ENCODE measurements at regions of chr18 and their contacts with region 1.

Region 1: GRCh38 chr18:48675352-48675761 is 136.5 kb downstream of the CTIF start:
- DNase-seq: peak; percentile 91 to 92 (median 92)
- ATAC-seq: peak; percentile 85 to 91 (median 87)
- H3K4me3 ChIP-seq: no peak overlapping the region
- H3K27ac ChIP-seq: peak overlapping the region in 2 of 3 donors; percentile 37 to 47
- H3K4me1 ChIP-seq: peaks cover 0 to 53% (median 27%) of the 10 kb centered on the region in 4 donors
- H3K27me3 ChIP-seq: no peaks in the 10 kb centered on the region
- CTCF ChIP-seq: peak; percentile 92 to 97 (median 94)
- POLR2A ChIP-seq: no peak

Region 2: DNA sequence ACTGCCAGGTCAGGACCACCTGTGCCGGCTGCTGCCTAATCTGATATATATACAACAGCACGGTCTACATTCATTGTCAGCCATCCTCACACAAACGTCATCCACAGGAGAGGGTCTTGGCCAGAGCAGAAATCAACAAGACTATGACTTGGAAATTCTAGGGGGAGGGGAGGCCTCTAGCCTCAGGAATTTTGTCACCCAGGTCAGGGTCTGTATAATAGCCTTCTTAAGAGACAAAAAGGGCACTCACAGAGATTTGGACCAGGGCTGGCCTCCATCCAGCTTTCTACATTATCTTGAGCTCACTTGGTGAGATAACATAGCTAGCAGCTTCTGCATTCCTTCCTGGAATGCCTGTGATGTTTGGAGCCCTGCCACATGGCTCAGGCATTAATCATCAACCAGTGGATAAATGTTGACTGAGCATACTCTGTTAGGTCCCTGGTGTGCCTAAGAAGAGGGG is 186.9 kb before region 1 on chr18:
- intact Hi-C with region 1: no loop called
- DNase-seq: peak; percentile 84 to 88 (median 85)
- ATAC-seq: peak; percentile 95 to 99 (median 98)
- H3K4me3 ChIP-seq: no peak overlapping the region
- H3K27ac ChIP-seq: no peak overlapping the region
- H3K4me1 ChIP-seq: peaks cover 0 to 13% (median 6%) of the 10 kb centered on the region in 4 donors
- H3K27me3 ChIP-seq: no peaks in the 10 kb centered on the region
- CTCF ChIP-seq: no peak
- POLR2A ChIP-seq: no peak

Region 3: DNA sequence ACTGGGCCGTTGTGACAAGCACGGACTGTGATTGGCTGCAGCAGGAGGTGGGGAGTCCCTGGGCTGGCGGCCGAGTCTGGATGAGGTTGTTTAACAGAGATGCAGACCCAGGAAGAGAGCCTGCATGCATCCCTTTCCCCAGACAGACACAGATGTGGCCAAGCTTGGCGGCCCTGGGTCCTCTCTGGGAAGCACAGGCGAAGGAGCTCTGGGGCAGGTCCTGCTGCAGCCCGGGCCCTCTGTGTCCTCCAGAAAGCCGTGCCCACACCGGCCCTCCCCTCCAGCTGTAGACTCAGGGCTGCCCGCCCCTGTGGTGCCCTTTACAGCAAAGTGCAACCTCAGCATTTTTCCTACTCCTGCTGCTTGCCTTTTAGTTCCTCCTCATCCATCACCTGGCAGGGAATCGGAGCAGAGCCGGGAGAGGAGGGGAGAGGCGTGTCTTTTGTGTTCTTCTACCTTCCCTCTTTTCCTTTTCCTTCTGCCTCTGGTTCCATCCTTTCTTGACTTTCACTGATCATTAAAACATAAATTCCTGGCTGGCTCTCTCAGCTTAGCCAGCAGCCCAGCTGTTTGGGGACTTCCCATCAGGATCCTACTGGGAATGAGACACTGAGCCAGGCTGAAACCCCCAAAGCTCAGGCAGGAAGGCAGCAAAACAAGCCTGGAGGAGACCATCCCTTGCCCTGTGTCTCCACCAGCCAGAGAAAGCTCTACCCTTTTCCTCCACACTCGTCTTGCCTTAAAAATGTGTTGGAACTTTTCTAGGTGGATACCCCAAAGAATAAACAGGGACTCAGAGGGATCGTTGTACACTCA is 61.6 kb before region 1 on chr18:
- intact Hi-C with region 1: no loop called
- DNase-seq: peak in 1 of 3 donors; percentile 56
- ATAC-seq: peak; percentile 6 to 53 (median 28)
- H3K4me3 ChIP-seq: no peak overlapping the region
- H3K27ac ChIP-seq: no peak overlapping the region
- H3K4me1 ChIP-seq: no peaks in the 10 kb centered on the region
- H3K27me3 ChIP-seq: no peaks in the 10 kb centered on the region
- CTCF ChIP-seq: no peak
- POLR2A ChIP-seq: no peak

Region 4: GRCh38 chr18:49041435-49042245 is 366.3 kb after region 1 on chr18:
- intact Hi-C with region 1: loop called in 1 of 2 experiments (anchors 10 kb)
- DNase-seq: peak in 2 of 3 donors; percentile 44 to 65
- ATAC-seq: peak; percentile 82 to 94 (median 84)
- H3K4me3 ChIP-seq: no peak overlapping the region
- H3K27ac ChIP-seq: no peak overlapping the region
- H3K4me1 ChIP-seq: no peaks in the 10 kb centered on the region
- H3K27me3 ChIP-seq: no peaks in the 10 kb centered on the region
- CTCF ChIP-seq: peak; percentile 56 to 63 (median 60)
- POLR2A ChIP-seq: no peak

Region 5: DNA sequence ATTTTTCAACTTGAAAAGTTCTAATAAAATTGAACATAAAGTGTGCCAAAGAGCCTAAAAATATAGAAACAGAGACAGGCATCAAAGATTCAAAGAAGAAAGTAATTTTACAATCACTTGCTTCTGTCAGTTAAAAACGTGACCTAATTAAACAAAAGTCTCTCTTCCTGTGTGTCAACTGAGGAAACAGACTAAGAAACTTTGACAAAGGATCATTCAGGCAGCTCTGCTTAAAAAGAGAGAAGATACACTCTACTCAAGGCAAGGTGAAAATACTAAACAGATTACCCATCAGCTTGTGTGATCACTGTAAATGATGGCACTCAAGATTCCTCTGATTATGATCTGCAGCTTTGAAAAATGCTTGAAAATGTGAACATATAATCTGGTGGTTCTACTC is 737.3 kb after region 1 on chr18:
- intact Hi-C with region 1: loop called in 1 of 2 experiments (anchors 10 kb)
- DNase-seq: no peak
- ATAC-seq: no peak
- H3K4me3 ChIP-seq: no peak overlapping the region
- H3K27ac ChIP-seq: no peak overlapping the region
- H3K4me1 ChIP-seq: peaks cover 0 to 12% (median 0%) of the 10 kb centered on the region in 4 donors
- H3K27me3 ChIP-seq: no peaks in the 10 kb centered on the region
- CTCF ChIP-seq: no peak
- POLR2A ChIP-seq: no peak